Psoas muscle (tissue), 8 donors: ENCODE measurements at regions of chr10 and their contacts with region 1.

Region 1: GRCh38 chr10:6580279-6581029 is 378 bp upstream of the PRKCQ start:
- DNase-seq: peak; percentile 83 to 93
- ATAC-seq: peak; percentile 85 to 93 (median 89)
- H3K4me3 ChIP-seq: peak overlapping the region; percentile 91
- H3K27ac ChIP-seq: peak overlapping the region; percentile 94
- H3K4me1 ChIP-seq: peaks cover 24% of the 10 kb centered on the region
- H3K27me3 ChIP-seq: no peaks in the 10 kb centered on the region
- CTCF ChIP-seq: peak; percentile 69

Region 2: GRCh38 chr10:6445501-6446316 is 134.7 kb before region 1 on chr10:
- intact Hi-C with region 1: loop called in 1 of 2 experiments (anchors 10 kb)
- DNase-seq: peak; percentile 56 to 81
- ATAC-seq: peak; percentile 75 to 81 (median 77)
- H3K4me3 ChIP-seq: peak overlapping the region; percentile 24
- H3K27ac ChIP-seq: peak overlapping the region; percentile 82
- H3K4me1 ChIP-seq: peaks cover 10% of the 10 kb centered on the region
- H3K27me3 ChIP-seq: no peaks in the 10 kb centered on the region
- CTCF ChIP-seq: peak; percentile 68

Region 3: GRCh38 chr10:6498771-6499170 is 81.7 kb before region 1 on chr10:
- intact Hi-C with region 1: loop called in 1 of 2 experiments (anchors 5 kb)
- DNase-seq: no peak
- ATAC-seq: peak; percentile 74 to 90 (median 79)
- H3K4me3 ChIP-seq: no peak overlapping the region
- H3K27ac ChIP-seq: peak overlapping the region; percentile 93
- H3K4me1 ChIP-seq: peaks cover 39% of the 10 kb centered on the region
- H3K27me3 ChIP-seq: no peaks in the 10 kb centered on the region
- CTCF ChIP-seq: no peak

Region 4: GRCh38 chr10:6514844-6515780 is 65.3 kb before region 1 on chr10:
- intact Hi-C with region 1: loop called (anchors 2 kb)
- DNase-seq: no peak
- ATAC-seq: peak; percentile 75 to 90 (median 84)
- H3K4me3 ChIP-seq: peak overlapping the region; percentile 57
- H3K27ac ChIP-seq: peak overlapping the region; percentile 87
- H3K4me1 ChIP-seq: peaks cover 26% of the 10 kb centered on the region
- H3K27me3 ChIP-seq: no peaks in the 10 kb centered on the region
- CTCF ChIP-seq: no peak

Region 5: DNA sequence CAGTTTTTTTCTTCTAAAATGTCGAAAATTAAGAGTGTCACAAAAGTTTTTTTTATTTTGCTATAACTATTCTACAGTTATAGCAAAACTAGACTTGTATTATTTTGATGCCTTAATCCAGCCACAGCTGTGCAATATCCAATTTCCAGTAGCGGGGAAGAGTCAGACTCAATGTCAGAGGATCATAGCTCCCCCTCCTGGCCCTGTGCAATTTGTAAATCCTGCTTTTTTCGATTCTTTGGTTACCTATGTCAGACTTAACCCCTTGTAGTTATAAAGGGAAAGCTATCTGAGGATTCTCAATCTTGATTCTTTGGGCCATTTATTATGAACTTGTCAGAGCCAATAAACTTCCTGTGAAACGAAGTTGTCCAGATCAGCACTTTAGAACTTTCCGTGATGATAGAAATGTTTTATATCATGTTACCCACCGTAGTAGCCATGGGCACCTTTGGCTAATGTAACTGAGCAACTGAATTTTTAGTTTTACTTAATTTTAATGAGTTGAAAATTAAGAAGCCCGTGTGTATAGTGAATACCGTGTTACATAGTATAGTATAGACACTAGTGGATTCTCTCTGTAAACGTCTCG is 87.3 kb after region 1 on chr10:
- intact Hi-C with region 1: no loop called
- DNase-seq: no peak
- ATAC-seq: peak; percentile 75 to 88 (median 80)
- H3K4me3 ChIP-seq: peak overlapping the region; percentile 8
- H3K27ac ChIP-seq: no peak overlapping the region
- H3K4me1 ChIP-seq: peaks cover 3% of the 10 kb centered on the region
- H3K27me3 ChIP-seq: no peaks in the 10 kb centered on the region
- CTCF ChIP-seq: peak; percentile 64